Activated B cell treated with CpG ODN at 0.5 μM for 24 hours (primary cell): ENCODE measurements at regions of chr5 and their contacts with region 1.

Region 1: DNA sequence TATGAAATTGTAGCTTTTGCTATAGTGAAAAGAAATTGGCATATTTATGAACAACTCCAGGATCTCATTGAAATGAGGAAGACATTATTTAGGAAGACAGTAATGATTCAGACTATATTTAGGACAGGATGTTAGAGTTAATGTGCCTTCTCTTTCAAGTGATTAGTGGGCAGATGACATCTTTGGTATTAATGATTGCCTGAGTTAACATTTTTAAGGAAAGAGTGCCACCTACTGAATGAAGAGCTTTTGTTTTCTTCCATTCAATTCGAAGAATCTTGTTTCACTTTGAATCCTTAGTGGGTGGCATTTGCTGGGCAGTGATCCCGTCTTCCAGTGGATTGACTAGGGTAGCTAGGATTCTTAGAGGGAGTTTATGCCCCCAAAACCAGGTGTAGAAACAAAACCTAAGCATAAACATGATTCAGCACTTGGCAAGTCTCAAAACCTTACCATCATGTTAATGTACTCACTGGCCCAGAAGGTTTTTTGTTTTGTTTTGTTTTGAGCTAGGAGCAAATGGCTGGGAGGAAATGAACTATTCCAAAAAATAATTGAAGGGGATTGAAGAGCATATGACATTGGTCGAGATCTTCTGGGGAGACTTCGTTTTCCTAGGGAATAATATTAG is 23.2 kb downstream of the MAP3K1 start:
- DNase-seq: no peak
- ATAC-seq: peak; percentile 59
- H3K4me3 Mint-ChIP-seq: peak overlapping the region; percentile 42
- H3K27ac Mint-ChIP-seq: peak overlapping the region; percentile 78
- H3K4me1 Mint-ChIP-seq: peaks cover 95% of the 10 kb centered on the region
- H3K27me3 Mint-ChIP-seq: no peaks in the 10 kb centered on the region
- CTCF ChIP-seq: no peak

Region 2: DNA sequence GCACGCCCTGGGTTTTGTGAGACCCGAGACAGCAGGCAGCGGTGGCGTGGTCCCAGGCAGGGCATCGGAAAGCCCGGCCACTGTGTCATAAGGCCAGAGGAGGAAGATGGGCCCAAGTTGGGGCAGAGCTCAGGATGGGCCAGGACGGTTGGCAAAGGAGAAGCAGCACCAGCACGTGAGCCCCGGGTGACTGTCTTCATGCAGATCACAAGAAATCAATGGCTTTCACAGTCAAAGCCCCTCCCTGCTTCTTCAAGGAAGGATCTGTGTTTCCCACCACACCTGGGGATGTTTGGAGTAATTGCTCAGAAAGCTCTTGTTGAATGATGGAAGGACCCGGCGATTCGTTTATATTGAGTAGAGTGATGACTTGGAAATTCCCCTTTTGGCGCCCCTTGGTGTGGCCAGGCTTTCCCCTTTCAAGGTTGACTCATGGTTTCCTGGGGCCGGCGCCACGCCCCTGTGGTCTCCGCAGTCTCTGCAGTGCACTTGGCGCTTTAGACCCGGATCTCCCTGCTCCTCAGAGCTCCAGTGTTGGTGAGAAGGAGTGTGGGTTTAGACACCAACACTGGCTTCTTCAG is 935.3 kb before region 1 on chr5:
- CTCF ChIA-PET with region 1: no interaction called
- POLR2A ChIA-PET with region 1: no interaction called
- intact Hi-C with region 1: no loop called
- DNase-seq: peak; percentile 62
- ATAC-seq: peak; percentile 96
- H3K4me3 Mint-ChIP-seq: peak overlapping the region; percentile 56
- H3K27ac Mint-ChIP-seq: peak overlapping the region; percentile 56
- H3K4me1 Mint-ChIP-seq: peaks cover 17% of the 10 kb centered on the region
- H3K27me3 Mint-ChIP-seq: peaks cover 8% of the 10 kb centered on the region
- CTCF ChIP-seq: no peak

Region 3: GRCh38 chr5:55936100-55936693 is 902.3 kb before region 1 on chr5:
- CTCF ChIA-PET with region 1: interaction called, 19 read pairs
- POLR2A ChIA-PET with region 1: interaction called, 3 read pairs
- intact Hi-C with region 1: loop called (anchors 1 kb)
- DNase-seq: peak; percentile 56
- ATAC-seq: peak; percentile 93
- H3K4me3 Mint-ChIP-seq: no peak overlapping the region
- H3K27ac Mint-ChIP-seq: no peak overlapping the region
- H3K4me1 Mint-ChIP-seq: no peaks in the 10 kb centered on the region
- H3K27me3 Mint-ChIP-seq: no peaks in the 10 kb centered on the region
- CTCF ChIP-seq: peak; percentile 48

Region 4: DNA sequence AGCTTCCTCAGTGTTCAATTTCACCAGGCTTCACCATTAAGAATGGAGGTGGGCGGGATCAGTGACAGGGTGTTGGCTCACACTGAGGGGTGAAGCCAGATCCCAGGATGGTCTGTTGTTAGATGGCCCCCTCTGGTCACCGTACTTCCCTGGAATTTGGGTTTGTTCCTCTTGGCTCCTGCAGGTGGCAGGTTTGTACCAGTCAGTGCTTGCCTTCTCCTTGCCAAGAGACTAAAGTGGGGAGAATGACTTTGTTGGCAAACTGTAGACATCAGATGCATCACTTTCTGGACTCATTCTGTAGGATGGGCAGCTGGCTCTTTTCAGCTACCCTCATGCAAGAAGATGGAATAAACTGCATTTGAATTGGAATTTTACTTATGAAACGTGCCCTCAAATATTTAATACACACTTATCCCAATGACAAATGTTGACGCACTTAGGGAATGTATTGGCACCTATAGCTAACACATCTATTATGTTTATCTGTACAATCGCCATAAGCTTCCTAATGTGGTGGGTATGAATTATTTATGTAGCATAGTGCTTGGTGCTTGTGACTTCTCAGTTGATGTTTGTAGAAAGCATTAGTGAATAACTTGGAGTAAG is 574.0 kb before region 1 on chr5:
- CTCF ChIA-PET with region 1: interaction called, 240 read pairs
- POLR2A ChIA-PET with region 1: interaction called, 3 read pairs
- intact Hi-C with region 1: no loop called
- DNase-seq: no peak
- ATAC-seq: peak; percentile 60
- H3K4me3 Mint-ChIP-seq: no peak overlapping the region
- H3K27ac Mint-ChIP-seq: no peak overlapping the region
- H3K4me1 Mint-ChIP-seq: peaks cover 2% of the 10 kb centered on the region
- H3K27me3 Mint-ChIP-seq: no peaks in the 10 kb centered on the region
- CTCF ChIP-seq: no peak

Region 5: GRCh38 chr5:56415356-56415765 is 423.2 kb before region 1 on chr5:
- CTCF ChIA-PET with region 1: interaction called, 5 read pairs
- POLR2A ChIA-PET with region 1: no interaction called
- intact Hi-C with region 1: loop called (anchors 1 kb)
- DNase-seq: peak; percentile 48
- ATAC-seq: peak; percentile 71
- H3K4me3 Mint-ChIP-seq: peak overlapping the region; percentile 78
- H3K27ac Mint-ChIP-seq: peak overlapping the region; percentile 99
- H3K4me1 Mint-ChIP-seq: peaks cover 82% of the 10 kb centered on the region
- H3K27me3 Mint-ChIP-seq: no peaks in the 10 kb centered on the region
- CTCF ChIP-seq: no peak

Region 6: GRCh38 chr5:56481428-56482357 is 356.8 kb before region 1 on chr5:
- CTCF ChIA-PET with region 1: interaction called, 20 read pairs
- POLR2A ChIA-PET with region 1: interaction called, 7 read pairs
- intact Hi-C with region 1: loop called (anchors 1 kb)
- DNase-seq: peak; percentile 41
- ATAC-seq: peak; percentile 14
- H3K4me3 Mint-ChIP-seq: peak overlapping the region; percentile 88
- H3K27ac Mint-ChIP-seq: peak overlapping the region; percentile 92
- H3K4me1 Mint-ChIP-seq: peaks cover 45% of the 10 kb centered on the region
- H3K27me3 Mint-ChIP-seq: no peaks in the 10 kb centered on the region
- CTCF ChIP-seq: no peak

Region 7: DNA sequence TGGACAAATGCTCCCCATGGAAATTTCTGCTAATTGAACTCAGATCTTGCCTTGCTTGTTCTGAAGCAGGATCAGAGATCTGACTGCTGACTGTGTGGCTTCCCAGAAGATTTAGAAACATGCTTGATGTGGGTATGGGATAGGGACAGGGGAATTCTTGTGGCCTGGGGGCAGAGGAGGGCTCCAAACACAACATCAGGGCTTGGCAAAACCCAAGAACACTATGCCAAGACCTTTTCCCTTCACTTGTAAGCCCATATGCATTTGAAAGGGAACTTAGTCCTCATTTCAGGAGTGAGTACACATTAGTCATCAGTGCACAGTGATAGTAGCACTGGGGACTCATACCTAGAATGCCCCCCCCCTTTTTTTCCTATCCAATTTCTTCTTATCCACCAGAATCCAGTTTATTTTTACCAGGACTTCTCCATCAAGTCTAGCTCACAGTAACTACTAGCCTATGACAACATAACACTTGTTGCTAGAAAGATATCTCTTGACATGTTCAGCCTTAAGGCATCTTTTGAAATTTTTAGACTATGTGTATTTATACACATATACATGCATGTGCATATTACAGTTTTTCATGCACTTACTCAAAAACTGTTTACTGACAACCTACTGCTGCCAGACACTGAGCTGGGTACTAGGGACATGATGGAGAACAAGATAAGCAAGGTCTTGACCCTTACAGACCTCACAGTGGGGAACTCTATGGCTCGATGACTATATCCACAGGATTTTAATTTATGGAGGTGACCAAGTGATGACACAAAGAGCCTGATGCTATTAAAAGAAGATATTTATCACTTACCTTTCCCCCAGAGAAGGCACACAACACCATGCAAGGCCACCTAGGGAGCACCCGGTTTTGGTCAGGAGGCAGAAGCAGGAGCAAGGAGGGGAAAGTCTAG is 181.5 kb before region 1 on chr5:
- CTCF ChIA-PET with region 1: no interaction called
- POLR2A ChIA-PET with region 1: no interaction called
- intact Hi-C with region 1: no loop called
- DNase-seq: no peak
- ATAC-seq: no peak
- H3K4me3 Mint-ChIP-seq: no peak overlapping the region
- H3K27ac Mint-ChIP-seq: no peak overlapping the region
- H3K4me1 Mint-ChIP-seq: peaks cover 15% of the 10 kb centered on the region
- H3K27me3 Mint-ChIP-seq: no peaks in the 10 kb centered on the region
- CTCF ChIP-seq: no peak

Region 8: DNA sequence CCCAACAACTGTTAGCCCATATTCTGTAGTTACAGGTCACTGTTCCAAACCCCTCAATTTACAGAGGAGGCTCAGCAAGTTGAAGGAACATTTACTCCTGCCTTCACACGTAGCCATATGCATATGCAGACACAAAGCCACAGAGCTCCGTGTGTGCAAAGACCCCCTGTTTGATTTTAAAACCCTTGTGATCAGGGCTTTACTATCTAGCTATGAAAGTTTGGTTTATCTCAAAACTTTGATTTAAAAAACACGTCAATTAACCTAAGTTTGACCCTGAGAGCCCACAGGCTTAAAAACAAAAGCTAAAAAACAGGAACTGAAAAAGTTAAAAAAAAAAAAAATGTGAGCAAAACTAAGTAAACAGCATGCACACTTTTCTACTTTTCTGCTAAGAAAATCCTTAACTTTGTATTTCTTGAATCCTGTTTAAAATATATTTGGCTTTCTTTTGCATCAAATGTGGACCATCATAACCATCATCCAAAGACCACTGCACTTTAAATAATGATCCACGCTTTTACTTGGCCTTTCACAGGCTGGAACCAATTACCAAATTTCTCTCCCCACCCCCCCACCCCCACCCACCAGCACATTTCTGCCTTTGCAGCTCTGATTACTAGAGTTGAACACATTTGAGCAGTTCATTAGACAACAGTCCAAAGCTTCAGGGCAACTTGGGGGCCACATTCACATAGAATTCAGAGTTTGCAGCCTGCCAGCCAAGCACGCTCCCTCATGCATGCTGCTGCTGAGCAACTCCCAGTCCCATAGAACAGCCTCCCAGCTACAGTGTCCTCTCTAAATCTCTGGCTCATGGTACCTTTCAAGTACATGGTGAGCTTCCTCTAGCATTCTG is 152.0 kb before region 1 on chr5:
- CTCF ChIA-PET with region 1: no interaction called
- POLR2A ChIA-PET with region 1: interaction called, 4 read pairs
- intact Hi-C with region 1: loop called (anchors 2 kb)
- DNase-seq: peak; percentile 31
- ATAC-seq: peak; percentile 72
- H3K4me3 Mint-ChIP-seq: peak overlapping the region; percentile 62
- H3K27ac Mint-ChIP-seq: peak overlapping the region; percentile 88
- H3K4me1 Mint-ChIP-seq: peaks cover 98% of the 10 kb centered on the region
- H3K27me3 Mint-ChIP-seq: no peaks in the 10 kb centered on the region
- CTCF ChIP-seq: no peak

Region 9: GRCh38 chr5:56791396-56791795 is 47.1 kb before region 1 on chr5:
- CTCF ChIA-PET with region 1: no interaction called
- POLR2A ChIA-PET with region 1: no interaction called
- intact Hi-C with region 1: no loop called
- DNase-seq: no peak
- ATAC-seq: no peak
- H3K4me3 Mint-ChIP-seq: no peak overlapping the region
- H3K27ac Mint-ChIP-seq: no peak overlapping the region
- H3K4me1 Mint-ChIP-seq: no peaks in the 10 kb centered on the region
- H3K27me3 Mint-ChIP-seq: no peaks in the 10 kb centered on the region
- CTCF ChIP-seq: no peak

Region 10: DNA sequence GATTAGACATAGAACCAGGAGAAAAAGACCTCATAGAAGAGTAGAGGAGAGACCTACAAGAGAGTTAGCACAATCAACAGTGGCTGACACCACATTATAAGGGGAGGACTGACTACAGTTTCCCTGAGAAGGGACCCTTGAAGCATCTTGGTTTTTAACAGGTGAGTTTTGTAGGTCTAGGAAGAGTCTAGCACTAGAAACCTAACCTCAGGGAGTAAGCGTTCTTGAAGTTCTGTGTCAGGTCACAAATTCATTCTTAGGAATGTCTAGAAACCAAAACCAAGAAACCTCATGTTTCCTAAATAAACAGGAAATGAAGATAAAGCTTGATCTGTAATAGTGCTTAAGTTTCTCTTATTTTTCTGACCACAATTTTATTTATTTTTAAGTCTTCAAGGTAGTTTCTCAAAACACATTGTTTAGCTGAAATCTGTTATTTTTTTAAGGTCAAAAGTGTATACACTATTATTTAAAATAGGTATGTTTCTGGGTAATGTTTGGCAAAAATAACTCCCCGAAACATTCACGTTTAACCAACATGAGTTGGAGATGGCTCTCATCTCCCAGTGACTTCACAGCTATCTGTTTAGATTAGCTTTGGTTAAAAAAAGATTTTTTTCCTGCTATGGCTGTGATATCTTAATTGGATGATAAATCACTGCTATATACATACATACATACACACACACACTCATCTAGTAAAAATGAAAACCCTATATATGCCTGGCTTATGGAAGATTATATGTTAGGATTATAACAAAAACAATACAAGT is 13.9 kb after region 1 on chr5:
- CTCF ChIA-PET with region 1: interaction called, 4 read pairs
- POLR2A ChIA-PET with region 1: no interaction called
- intact Hi-C with region 1: loop called (anchors 2 kb)
- DNase-seq: no peak
- ATAC-seq: no peak
- H3K4me3 Mint-ChIP-seq: peak overlapping the region; percentile 54
- H3K27ac Mint-ChIP-seq: peak overlapping the region; percentile 8
- H3K4me1 Mint-ChIP-seq: peaks cover 95% of the 10 kb centered on the region
- H3K27me3 Mint-ChIP-seq: no peaks in the 10 kb centered on the region
- CTCF ChIP-seq: no peak

Region 11: DNA sequence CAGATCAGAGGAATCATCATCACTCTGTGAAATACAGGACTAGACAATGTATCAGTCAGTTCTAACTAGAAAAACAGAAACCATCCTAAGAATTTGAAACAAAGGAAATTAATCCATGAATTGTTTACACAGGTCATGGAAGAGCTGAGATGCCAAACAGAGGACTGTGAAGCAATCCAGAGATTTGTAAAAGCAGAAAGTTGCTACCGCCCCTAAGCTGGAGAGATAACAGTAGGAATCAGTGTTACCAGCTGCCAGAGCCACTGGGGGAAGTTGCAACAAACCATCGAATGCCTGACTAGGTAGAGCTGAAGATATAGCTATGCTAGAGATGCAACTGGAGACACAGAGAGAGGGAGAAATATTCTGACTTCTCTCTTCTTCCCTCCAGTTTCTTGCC is 123.8 kb after region 1 on chr5:
- CTCF ChIA-PET with region 1: no interaction called
- POLR2A ChIA-PET with region 1: no interaction called
- intact Hi-C with region 1: no loop called
- DNase-seq: no peak
- ATAC-seq: no peak
- H3K4me3 Mint-ChIP-seq: no peak overlapping the region
- H3K27ac Mint-ChIP-seq: no peak overlapping the region
- H3K4me1 Mint-ChIP-seq: no peaks in the 10 kb centered on the region
- H3K27me3 Mint-ChIP-seq: peaks cover 38% of the 10 kb centered on the region
- CTCF ChIP-seq: no peak